ENCODE measurements at regions of chr1 and their contacts with region 1.

Region 1: DNA sequence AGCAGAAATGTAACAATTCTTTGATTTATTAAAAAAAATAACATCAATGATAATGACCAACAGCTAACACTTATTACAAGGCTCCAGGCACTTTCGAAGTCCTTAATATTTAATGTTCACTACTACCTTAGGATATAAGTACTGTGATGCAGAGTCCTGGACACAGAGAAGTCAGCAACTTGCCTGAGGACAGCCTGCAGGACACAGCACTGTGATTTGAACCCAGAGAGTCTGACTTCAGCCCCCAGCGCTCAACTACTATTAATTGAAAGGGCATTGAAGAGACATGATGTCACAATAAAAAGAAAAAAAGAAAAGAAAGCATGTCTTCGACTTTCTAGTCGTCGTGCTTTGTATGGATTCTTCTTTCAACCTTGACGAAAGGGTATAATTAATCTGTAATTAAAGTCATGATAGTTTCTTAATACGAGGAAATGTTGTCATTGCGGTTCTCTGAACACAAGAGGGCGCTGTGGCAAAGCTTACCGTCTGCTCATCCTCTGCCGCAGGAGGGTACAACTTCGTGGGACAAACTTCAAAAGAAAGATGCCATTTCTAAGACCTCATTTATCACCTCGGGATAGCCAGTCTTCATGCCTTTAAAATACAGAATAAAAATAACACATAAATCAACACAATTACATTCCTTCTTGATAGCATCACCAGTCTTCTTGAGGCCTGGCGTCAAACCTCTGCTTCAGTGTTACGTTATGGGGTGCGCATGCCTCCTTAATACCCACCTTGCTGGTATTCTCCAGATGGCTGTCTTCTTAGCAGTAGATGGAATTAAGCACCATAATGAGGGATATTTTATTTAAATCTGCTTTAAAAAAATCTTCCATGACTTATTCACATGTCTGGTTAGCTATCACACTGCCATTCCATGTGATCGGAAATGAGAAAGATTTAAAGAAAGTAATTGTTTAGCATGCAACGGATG is 240.1 kb downstream of the DISC1 start:
- DNase-seq: peak; percentile 53
- H3K4me3 ChIP-seq: no peak overlapping the region
- H3K27ac ChIP-seq: no peak overlapping the region
- H3K4me1 ChIP-seq: peaks cover 0 to 14% (median 2%) of the 10 kb centered on the region in 4 donors
- H3K27me3 ChIP-seq: no peaks in the 10 kb centered on the region
- CTCF ChIP-seq: peak; percentile 78 to 91 (median 85)
- EP300 ChIP-seq: no peak
- POLR2A ChIP-seq: no peak

Region 2: DNA sequence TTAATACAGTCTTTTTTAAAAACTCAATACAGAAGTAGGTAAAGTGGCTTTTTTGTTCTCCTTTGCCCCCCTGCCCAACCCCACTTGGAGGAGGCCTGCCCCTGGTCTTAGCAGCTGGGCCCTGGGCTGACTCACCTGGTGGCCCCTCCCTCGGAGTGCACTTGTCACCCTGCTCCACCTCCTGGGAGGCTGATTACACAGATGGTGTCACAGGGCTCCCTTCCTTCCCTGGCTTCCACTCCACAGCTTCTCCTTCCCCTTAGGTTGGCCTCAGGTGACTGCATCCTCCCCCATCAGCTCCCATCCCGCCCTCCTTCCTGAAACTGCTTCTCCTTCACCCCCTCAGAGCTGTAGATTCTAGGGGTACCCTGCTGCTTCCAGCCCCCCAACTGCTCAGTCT is 1131.2 kb before region 1 on chr1:
- in situ Hi-C with region 1: no loop called
- intact Hi-C with region 1: no loop called
- DNase-seq: peak; percentile 41
- H3K4me3 ChIP-seq: no peak overlapping the region
- H3K27ac ChIP-seq: no peak overlapping the region
- H3K4me1 ChIP-seq: no peaks in the 10 kb centered on the region
- H3K27me3 ChIP-seq: no peaks in the 10 kb centered on the region
- CTCF ChIP-seq: no peak
- EP300 ChIP-seq: no peak
- POLR2A ChIP-seq: no peak

Region 3: DNA sequence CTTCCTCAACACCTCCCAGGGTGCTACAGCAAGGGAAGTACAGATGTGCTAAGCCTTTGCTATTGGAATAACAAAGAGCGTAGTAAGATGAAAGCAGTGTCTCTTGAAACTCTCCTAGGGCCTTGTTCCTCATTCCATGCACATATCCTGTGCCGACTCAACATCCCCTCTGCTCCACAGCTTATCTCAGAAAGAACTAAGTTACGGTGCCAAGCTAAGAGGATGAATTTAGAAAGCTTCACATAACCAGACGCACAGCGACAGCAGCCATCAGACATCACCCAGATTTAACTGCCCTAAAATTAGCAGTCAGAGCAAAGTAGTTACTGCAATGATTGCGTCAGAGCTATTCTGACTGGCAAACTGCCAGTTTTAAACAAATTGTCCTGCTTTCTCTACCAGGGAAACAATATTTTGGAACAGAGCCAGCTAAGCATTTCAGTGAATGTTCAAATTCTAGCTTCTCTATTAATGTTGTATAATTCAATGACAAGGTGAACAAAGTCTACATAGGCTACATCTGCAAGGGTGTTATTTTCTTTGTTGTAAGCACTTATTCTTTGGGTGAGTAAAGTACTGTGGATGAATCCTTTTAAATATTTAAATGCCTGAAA is 753.8 kb after region 1 on chr1:
- in situ Hi-C with region 1: loop called in 2 of 4 experiments (anchors 10 to 25 kb)
- intact Hi-C with region 1: no loop called
- DNase-seq: peak; percentile 66
- H3K4me3 ChIP-seq: no peak overlapping the region
- H3K27ac ChIP-seq: peak overlapping the region; percentile 58 to 94 (median 78)
- H3K4me1 ChIP-seq: peaks cover 28 to 81% (median 48%) of the 10 kb centered on the region in 4 donors
- H3K27me3 ChIP-seq: no peaks in the 10 kb centered on the region
- CTCF ChIP-seq: no peak
- EP300 ChIP-seq: no peak
- POLR2A ChIP-seq: no peak

Region 4: GRCh38 chr1:233240829-233241682 is 1374.4 kb after region 1 on chr1:
- in situ Hi-C with region 1: loop called in 2 of 4 experiments (anchors 25 kb)
- intact Hi-C with region 1: no loop called
- DNase-seq: peak; percentile 73
- H3K4me3 ChIP-seq: no peak overlapping the region
- H3K27ac ChIP-seq: peak overlapping the region; percentile 54 to 82 (median 80)
- H3K4me1 ChIP-seq: peaks cover 14 to 36% (median 25%) of the 10 kb centered on the region in 4 donors
- H3K27me3 ChIP-seq: no peaks in the 10 kb centered on the region
- CTCF ChIP-seq: peak; percentile 72 to 82 (median 78)
- EP300 ChIP-seq: no peak
- POLR2A ChIP-seq: no peak